Posterior vena cava (tissue), 2 donors: ENCODE measurements at regions of chr16 and their contacts with region 1.

Region 1: GRCh38 chr16:4026854-4027253 is 89.4 kb downstream of the ADCY9 start:
- DNase-seq: peak; percentile 5

Region 2: DNA sequence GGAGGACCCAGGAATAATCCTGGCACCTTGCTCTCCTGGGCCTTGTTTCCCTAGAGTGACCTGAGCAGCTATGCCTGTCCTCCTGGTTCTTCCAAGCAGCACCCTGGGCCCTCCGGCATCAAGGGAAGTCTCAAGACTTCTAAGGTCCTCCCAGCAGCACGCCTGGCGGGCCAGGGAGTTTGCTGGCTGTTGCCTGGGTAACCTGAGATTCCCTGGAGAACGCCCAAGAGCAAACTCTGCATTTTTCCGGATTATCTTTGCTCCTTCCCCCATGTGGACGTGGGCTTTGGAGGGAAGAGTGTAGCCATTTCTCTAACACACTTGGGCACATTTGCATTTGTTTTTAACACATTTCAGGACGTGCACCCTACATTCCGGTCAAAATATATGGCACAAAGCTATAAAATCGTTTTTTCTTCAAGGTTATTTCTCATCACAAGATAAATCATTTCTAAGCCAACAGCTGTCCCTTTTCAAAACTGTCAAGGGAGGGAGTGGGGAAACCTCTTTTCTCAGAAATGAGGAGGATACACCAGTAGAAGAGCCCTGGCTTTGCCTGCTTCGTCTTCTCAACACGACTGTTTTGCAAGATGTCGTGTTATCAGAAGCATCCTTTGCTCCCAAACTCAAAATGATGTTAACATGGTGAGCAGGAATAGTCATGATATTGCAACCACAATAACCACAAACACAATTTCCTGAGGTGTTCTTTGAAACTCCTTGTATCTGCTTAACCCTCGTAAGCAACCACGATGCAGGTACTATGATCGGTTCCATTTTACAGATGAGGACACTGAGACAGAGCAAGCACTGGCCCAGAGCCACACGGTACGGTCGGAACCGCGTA is 27.2 kb before region 1 on chr16:
- intact Hi-C with region 1: loop called in 1 of 2 experiments (anchors 2 kb)
- DNase-seq: no peak